CD8-positive, alpha-beta T cell (primary cell): ENCODE measurements at regions of chr17 and their contacts with region 1.

Region 1: GRCh38 chr17:36578671-36579070 is 13.0 kb upstream of the DHRS11 start:
- DNase-seq: no peak
- ATAC-seq: no peak
- H3K4me3 ChIP-seq: no peak overlapping the region
- H3K4me3 Mint-ChIP-seq: no peak overlapping the region
- H3K27ac ChIP-seq: no peak overlapping the region
- H3K27ac Mint-ChIP-seq: peak overlapping the region; percentile 18
- H3K4me1 ChIP-seq: no peaks in the 10 kb centered on the region
- H3K4me1 Mint-ChIP-seq: peaks cover 20% of the 10 kb centered on the region
- H3K27me3 ChIP-seq: no peaks in the 10 kb centered on the region
- H3K27me3 Mint-ChIP-seq: no peaks in the 10 kb centered on the region
- CTCF ChIP-seq: no peak

Region 2: GRCh38 chr17:35645923-35646322 is 932.7 kb before region 1 on chr17:
- CTCF ChIA-PET with region 1: no interaction called
- POLR2A ChIA-PET with region 1: no interaction called
- intact Hi-C with region 1: no loop called
- DNase-seq: no peak
- ATAC-seq: no peak
- H3K4me3 ChIP-seq: no peak overlapping the region
- H3K4me3 Mint-ChIP-seq: no peak overlapping the region
- H3K27ac ChIP-seq: no peak overlapping the region
- H3K27ac Mint-ChIP-seq: no peak overlapping the region
- H3K4me1 ChIP-seq: no peaks in the 10 kb centered on the region
- H3K4me1 Mint-ChIP-seq: peaks cover 1% of the 10 kb centered on the region
- H3K27me3 ChIP-seq: no peaks in the 10 kb centered on the region
- H3K27me3 Mint-ChIP-seq: no peaks in the 10 kb centered on the region
- CTCF ChIP-seq: no peak

Region 3: GRCh38 chr17:36553459-36553858 is 25.2 kb before region 1 on chr17:
- CTCF ChIA-PET with region 1: no interaction called
- POLR2A ChIA-PET with region 1: no interaction called
- intact Hi-C with region 1: no loop called
- DNase-seq: peak in 2 of 9 experiments; percentile 25 to 57
- ATAC-seq: no peak
- H3K4me3 ChIP-seq: peak overlapping the region in 1 of 2 experiments; percentile 12
- H3K4me3 Mint-ChIP-seq: peak overlapping the region; percentile 58
- H3K27ac ChIP-seq: no peak overlapping the region
- H3K27ac Mint-ChIP-seq: peak overlapping the region; percentile 64
- H3K4me1 ChIP-seq: peaks cover 74% of the 10 kb centered on the region
- H3K4me1 Mint-ChIP-seq: peaks cover 68% of the 10 kb centered on the region
- H3K27me3 ChIP-seq: no peaks in the 10 kb centered on the region
- H3K27me3 Mint-ChIP-seq: no peaks in the 10 kb centered on the region
- CTCF ChIP-seq: no peak

Region 4: DNA sequence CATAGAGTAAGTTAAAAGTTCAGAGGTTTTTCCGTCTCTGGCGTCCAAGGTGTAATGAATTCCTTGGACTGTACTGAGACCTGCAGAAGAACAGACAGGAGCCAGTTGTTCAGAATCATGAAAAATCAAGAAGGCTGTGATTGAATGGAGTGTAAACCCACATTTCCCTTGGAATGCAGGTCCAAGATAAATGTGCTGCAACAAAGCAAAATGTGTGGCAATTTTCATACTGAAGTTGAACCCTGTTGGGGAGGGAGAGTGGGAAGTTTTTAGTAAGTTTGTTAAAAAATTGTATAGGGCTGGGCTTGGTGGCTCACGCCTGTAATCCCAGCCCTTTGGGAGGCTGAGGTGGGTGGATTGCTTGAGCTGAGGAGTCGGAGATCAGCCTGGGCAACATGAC is 12.6 kb before region 1 on chr17:
- CTCF ChIA-PET with region 1: no interaction called
- POLR2A ChIA-PET with region 1: no interaction called
- intact Hi-C with region 1: loop called in 1 of 2 experiments (anchors 2 kb)
- DNase-seq: no peak
- ATAC-seq: no peak
- H3K4me3 ChIP-seq: no peak overlapping the region
- H3K4me3 Mint-ChIP-seq: no peak overlapping the region
- H3K27ac ChIP-seq: no peak overlapping the region
- H3K27ac Mint-ChIP-seq: no peak overlapping the region
- H3K4me1 ChIP-seq: no peaks in the 10 kb centered on the region
- H3K4me1 Mint-ChIP-seq: peaks cover 29% of the 10 kb centered on the region
- H3K27me3 ChIP-seq: no peaks in the 10 kb centered on the region
- H3K27me3 Mint-ChIP-seq: no peaks in the 10 kb centered on the region
- CTCF ChIP-seq: no peak

Region 5: DNA sequence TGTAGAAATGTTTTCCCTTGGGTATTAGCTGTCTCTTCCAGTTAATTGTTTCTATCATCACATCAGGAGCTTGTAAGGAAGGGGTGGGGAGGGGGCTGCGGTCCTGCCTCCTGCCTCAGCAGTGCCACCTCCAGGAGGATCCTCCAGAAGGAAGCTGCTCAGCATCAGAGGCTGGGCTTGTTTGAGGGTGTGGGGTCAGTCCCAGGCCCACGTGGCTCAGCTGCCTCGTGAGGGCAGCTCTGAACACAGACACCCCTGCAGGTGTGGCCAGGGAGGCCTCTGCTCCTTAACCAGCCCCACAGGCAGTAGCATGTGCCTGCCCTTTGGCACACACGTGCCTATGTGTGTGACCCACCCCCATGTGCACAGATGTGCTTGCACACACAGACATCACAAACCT is 69.0 kb after region 1 on chr17:
- CTCF ChIA-PET with region 1: no interaction called
- POLR2A ChIA-PET with region 1: no interaction called
- intact Hi-C with region 1: no loop called
- DNase-seq: no peak
- ATAC-seq: no peak
- H3K4me3 ChIP-seq: no peak overlapping the region
- H3K4me3 Mint-ChIP-seq: no peak overlapping the region
- H3K27ac ChIP-seq: no peak overlapping the region
- H3K27ac Mint-ChIP-seq: no peak overlapping the region
- H3K4me1 ChIP-seq: no peaks in the 10 kb centered on the region
- H3K4me1 Mint-ChIP-seq: peaks cover 4% of the 10 kb centered on the region
- H3K27me3 ChIP-seq: peaks cover 10% of the 10 kb centered on the region in 2 experiments
- H3K27me3 Mint-ChIP-seq: peaks cover 36% of the 10 kb centered on the region
- CTCF ChIP-seq: no peak

Region 6: GRCh38 chr17:37168731-37169353 is 590.2 kb after region 1 on chr17:
- CTCF ChIA-PET with region 1: no interaction called
- POLR2A ChIA-PET with region 1: no interaction called
- intact Hi-C with region 1: no loop called
- DNase-seq: no peak
- ATAC-seq: no peak
- H3K4me3 ChIP-seq: no peak overlapping the region
- H3K4me3 Mint-ChIP-seq: no peak overlapping the region
- H3K27ac ChIP-seq: no peak overlapping the region
- H3K27ac Mint-ChIP-seq: no peak overlapping the region
- H3K4me1 ChIP-seq: no peaks in the 10 kb centered on the region
- H3K4me1 Mint-ChIP-seq: no peaks in the 10 kb centered on the region
- H3K27me3 ChIP-seq: no peaks in the 10 kb centered on the region
- H3K27me3 Mint-ChIP-seq: no peaks in the 10 kb centered on the region
- CTCF ChIP-seq: no peak